ENCODE measurements at regions of chr6 and their contacts with region 1.

Region 1: DNA sequence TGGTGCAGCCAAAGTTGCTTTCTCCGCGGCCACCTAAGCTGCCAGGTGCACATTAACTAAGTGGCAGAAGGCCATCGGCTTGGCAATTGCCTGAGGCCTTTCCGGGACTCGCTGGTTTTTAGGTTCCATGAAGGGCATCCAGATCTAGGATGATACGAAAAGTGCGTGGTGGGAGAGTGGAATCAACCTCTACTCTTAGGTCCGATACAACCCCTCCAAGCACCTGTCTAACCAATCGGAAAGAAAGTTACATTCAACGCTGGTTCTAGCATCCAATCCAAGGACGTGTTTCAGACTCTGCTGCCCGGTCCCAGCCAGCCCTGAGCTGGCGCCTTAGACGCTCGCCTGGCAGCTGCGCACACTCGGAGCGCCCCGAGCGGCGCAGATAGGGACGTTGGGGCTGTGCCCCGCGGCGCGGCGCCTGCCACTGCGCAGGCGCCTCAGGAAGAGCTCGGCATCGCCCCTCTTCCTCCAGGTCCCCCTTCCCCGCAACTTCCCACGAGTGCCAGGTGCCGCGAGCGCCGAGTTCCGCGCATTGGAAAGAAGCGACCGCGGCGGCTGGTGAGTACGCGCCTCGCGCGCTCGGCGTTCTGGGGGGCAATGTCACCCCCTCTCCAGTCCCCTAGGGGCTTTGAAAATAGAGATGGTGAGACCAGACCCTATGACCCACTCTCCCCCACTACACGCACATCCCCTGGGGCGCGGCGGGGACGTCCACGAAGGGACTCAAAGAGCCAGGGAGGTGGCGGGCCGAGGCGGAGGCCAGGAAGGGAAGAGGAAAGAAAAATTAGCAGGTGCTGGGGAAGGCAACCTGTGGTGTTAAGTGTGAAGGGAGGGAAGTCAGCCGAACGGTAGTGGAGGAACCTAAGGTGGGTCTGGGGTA is at the start of gene ENPP4:
- DNase-seq: peak; percentile 78 to 98 (median 91)
- ATAC-seq: peak; percentile 100
- H3K4me3 ChIP-seq: peak within 1 kb of the TSS; percentile 98
- H3K4me3 Mint-ChIP-seq: peak within 1 kb of the TSS; percentile 94 to 99 (median 98)
- H3K27ac ChIP-seq: peak within 1 kb of the TSS; percentile 73
- H3K27ac Mint-ChIP-seq: peak within 1 kb of the TSS; percentile 86 to 97 (median 92)
- H3K4me1 ChIP-seq: peaks cover 15 to 18% of the 10 kb centered on the region in 2 donors
- H3K4me1 Mint-ChIP-seq: peaks cover 19 to 59% (median 46%) of the 10 kb centered on the region in 7 donors
- H3K27me3 ChIP-seq: no peaks in the 10 kb centered on the region
- H3K27me3 Mint-ChIP-seq: peaks cover 0 to 4% (median 0%) of the 10 kb centered on the region in 5 donors
- total RNA-seq, gene ENPP4: 3.8 to 9.8 (median 8.2) TPM

Region 2: DNA sequence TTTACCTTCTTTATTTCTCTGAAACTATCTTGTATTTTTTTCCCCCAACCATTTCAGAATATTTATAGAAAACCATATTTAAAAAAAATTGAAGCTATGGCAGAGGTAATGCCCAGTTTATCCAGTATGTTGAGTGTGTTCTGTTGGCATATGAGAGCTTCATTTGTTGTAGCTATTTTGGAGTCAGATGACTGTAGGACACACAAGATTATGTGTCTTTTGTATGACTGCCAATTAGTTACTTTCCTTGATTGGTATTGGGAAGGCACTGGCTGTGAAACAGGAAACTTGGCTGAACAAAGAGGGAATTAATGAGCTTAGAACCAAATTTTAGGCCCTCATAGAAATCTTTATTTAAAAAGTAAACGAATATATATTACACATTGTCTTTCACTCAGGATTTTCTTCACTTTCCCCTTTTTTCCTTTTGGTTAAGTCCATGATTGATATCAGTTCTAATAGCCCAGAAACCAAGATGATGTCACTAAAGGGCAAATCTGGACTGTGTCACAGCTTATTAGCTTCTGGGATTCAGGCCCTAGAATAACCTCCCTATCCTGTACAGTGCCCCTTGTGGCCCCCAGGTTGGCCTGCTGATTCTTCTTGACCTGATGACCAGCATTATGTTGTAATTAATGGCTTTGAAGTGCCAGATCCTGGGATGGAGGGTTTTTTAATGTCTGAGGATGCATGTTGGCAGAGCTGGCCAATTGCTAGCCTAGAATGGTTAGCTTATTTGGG is 1732.3 kb before region 1 on chr6:
- CTCF ChIA-PET with region 1: no interaction called
- POLR2A ChIA-PET with region 1: no interaction called
- intact Hi-C with region 1: no loop called
- DNase-seq: no peak
- ATAC-seq: no peak
- H3K4me3 ChIP-seq: no peak overlapping the region
- H3K4me3 Mint-ChIP-seq: no peak overlapping the region
- H3K27ac ChIP-seq: no peak overlapping the region
- H3K27ac Mint-ChIP-seq: peak overlapping the region in 2 of 9 donors; percentile 46 to 52
- H3K4me1 ChIP-seq: no peaks in the 10 kb centered on the region
- H3K4me1 Mint-ChIP-seq: peaks cover 26 to 58% (median 32%) of the 10 kb centered on the region in 7 donors
- H3K27me3 ChIP-seq: no peaks in the 10 kb centered on the region
- H3K27me3 Mint-ChIP-seq: no peaks in the 10 kb centered on the region

Region 3: DNA sequence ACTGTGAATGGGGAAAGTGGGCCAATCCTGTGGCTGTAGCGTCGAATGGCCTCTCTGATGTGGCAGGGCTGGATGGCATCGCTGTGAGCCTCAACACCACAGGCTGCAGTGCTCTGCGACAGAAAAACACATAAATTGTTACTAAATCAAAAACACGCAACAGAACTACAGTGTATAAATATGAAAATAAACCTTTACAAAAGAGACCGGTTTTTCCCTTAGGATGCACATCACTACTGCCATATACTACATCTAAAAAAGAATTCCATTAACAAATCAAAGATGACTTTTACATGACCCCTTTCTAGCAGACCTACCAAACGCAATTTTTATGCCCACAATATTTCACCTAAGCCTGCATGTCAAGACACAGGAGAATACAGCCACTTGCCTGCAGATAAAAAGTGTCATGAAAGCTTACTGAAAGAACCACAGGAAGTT is 1197.2 kb before region 1 on chr6:
- CTCF ChIA-PET with region 1: no interaction called
- POLR2A ChIA-PET with region 1: no interaction called
- intact Hi-C with region 1: loop called in 1 of 2 experiments (anchors 10 kb)
- DNase-seq: peak in 7 of 9 donors; percentile 46 to 66 (median 58)
- ATAC-seq: peak; percentile 91
- H3K4me3 ChIP-seq: peak overlapping the region; percentile 37
- H3K4me3 Mint-ChIP-seq: peak overlapping the region; percentile 78 to 98 (median 88)
- H3K27ac ChIP-seq: peak overlapping the region; percentile 71
- H3K27ac Mint-ChIP-seq: peak overlapping the region; percentile 92 to 99 (median 96)
- H3K4me1 ChIP-seq: peaks cover 17 to 42% of the 10 kb centered on the region in 2 donors
- H3K4me1 Mint-ChIP-seq: peaks cover 26 to 67% (median 60%) of the 10 kb centered on the region in 7 donors
- H3K27me3 ChIP-seq: no peaks in the 10 kb centered on the region
- H3K27me3 Mint-ChIP-seq: no peaks in the 10 kb centered on the region

Region 4: GRCh38 chr6:45930420-45931040 is 199.3 kb before region 1 on chr6:
- CTCF ChIA-PET with region 1: interaction called, 5 read pairs
- POLR2A ChIA-PET with region 1: no interaction called
- intact Hi-C with region 1: loop called in 1 of 2 experiments (anchors 1 kb)
- DNase-seq: peak in 8 of 9 donors; percentile 28 to 55 (median 43)
- ATAC-seq: peak; percentile 71
- H3K4me3 ChIP-seq: no peak overlapping the region
- H3K4me3 Mint-ChIP-seq: no peak overlapping the region
- H3K27ac ChIP-seq: no peak overlapping the region
- H3K27ac Mint-ChIP-seq: no peak overlapping the region
- H3K4me1 ChIP-seq: no peaks in the 10 kb centered on the region
- H3K4me1 Mint-ChIP-seq: peaks cover 0 to 5% (median 0%) of the 10 kb centered on the region in 7 donors
- H3K27me3 ChIP-seq: no peaks in the 10 kb centered on the region
- H3K27me3 Mint-ChIP-seq: peaks cover 0 to 5% (median 0%) of the 10 kb centered on the region in 5 donors

Region 5: DNA sequence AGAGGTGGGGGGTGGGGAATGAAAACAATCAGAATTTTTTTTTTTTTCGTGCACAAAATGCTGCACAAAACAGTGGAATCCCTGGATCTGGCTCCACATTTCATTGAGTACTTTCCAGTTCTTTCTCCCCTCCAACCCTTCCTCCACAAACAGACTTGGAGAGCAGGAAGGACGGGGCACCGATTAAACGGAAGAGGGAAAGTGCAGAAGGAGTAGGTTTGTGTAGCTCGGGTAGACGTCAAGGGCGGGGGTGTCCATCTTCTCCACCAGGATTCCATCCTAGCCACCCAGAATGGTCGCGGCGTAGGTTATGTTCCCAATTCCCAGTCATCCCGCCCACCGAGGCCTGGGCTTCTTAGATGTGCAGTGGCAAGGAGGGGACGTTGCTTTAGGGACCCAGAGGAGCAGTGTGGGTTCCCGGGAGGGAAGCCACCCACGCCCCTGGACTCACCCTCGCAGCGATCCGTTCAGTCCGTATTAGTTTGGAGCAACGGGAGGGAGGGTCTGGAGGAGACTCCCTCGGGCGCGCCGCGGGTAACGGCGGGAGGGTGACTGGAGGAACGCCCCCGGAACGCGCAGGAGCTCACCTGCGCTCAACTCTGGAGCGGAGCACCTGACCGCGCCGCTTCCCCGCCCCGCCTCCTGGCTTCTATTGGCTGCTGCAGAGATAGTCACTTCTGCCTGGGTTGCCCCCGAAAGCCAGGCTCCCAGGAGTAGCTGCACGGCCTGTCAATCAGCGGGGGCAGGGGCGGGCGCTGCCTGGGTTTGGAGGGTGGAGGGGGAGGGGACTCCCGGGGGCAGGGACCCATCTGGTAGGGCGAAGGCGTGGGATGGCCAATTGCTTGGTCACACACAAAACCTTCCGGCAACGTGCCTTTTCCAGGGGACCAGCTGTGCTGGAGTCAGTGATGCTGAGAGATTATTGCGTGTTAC is 40.8 kb after region 1 on chr6 and contains the start of gene ENPP5:
- CTCF ChIA-PET with region 1: no interaction called
- POLR2A ChIA-PET with region 1: interaction called, 3 read pairs
- intact Hi-C with region 1: loop called (anchors 1 to 2 kb)
- DNase-seq: peak; percentile 31 to 69 (median 56)
- ATAC-seq: peak; percentile 92
- H3K4me3 ChIP-seq: peak within 1 kb of the TSS; percentile 79
- H3K4me3 Mint-ChIP-seq: peak within 1 kb of the TSS; percentile 68 to 88 (median 84)
- H3K27ac ChIP-seq: no peak within 1 kb of the TSS
- H3K27ac Mint-ChIP-seq: peak within 1 kb of the TSS in 1 of 9 donors; percentile 3
- H3K4me1 ChIP-seq: peaks cover 0 to 20% of the 10 kb centered on the region in 2 donors
- H3K4me1 Mint-ChIP-seq: peaks cover 6 to 19% (median 13%) of the 10 kb centered on the region in 7 donors
- H3K27me3 ChIP-seq: no peaks in the 10 kb centered on the region
- H3K27me3 Mint-ChIP-seq: peaks cover 15 to 74% (median 29%) of the 10 kb centered on the region in 5 donors
- total RNA-seq, gene ENPP5: 0.59 to 1.4 (median 0.92) TPM in 3 of 5 experiments, not detected in the others

Region 6: DNA sequence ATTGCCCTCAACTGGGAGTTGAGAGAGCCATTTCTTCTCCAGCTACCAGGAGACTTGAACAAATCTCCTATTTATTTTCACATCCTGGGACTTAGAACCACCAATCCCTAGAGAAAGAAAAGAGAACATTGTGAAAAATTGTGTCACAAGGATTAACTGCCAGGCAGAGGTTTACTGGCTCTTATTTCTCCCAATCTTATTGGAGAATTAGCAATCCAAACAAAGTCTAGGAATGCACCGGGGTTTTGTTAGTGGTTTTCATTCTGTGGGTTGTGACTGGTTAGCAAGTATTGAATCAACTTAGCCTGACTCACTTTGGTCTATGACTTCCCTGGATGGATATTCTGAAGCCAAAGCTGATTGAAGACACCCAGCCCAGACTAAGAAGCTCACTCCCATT is 62.1 kb after region 1 on chr6:
- CTCF ChIA-PET with region 1: no interaction called
- POLR2A ChIA-PET with region 1: no interaction called
- intact Hi-C with region 1: no loop called
- DNase-seq: no peak
- ATAC-seq: no peak
- H3K4me3 ChIP-seq: no peak overlapping the region
- H3K4me3 Mint-ChIP-seq: no peak overlapping the region
- H3K27ac ChIP-seq: no peak overlapping the region
- H3K27ac Mint-ChIP-seq: no peak overlapping the region
- H3K4me1 ChIP-seq: no peaks in the 10 kb centered on the region
- H3K4me1 Mint-ChIP-seq: no peaks in the 10 kb centered on the region
- H3K27me3 ChIP-seq: no peaks in the 10 kb centered on the region
- H3K27me3 Mint-ChIP-seq: peaks cover 10 to 27% (median 19%) of the 10 kb centered on the region in 5 donors

Region 7: GRCh38 chr6:46221222-46221793 is 91.4 kb after region 1 on chr6:
- CTCF ChIA-PET with region 1: no interaction called
- POLR2A ChIA-PET with region 1: no interaction called
- intact Hi-C with region 1: no loop called
- DNase-seq: peak in 1 of 9 donors; percentile 4
- ATAC-seq: peak; percentile 63
- H3K4me3 ChIP-seq: no peak overlapping the region
- H3K4me3 Mint-ChIP-seq: no peak overlapping the region
- H3K27ac ChIP-seq: no peak overlapping the region
- H3K27ac Mint-ChIP-seq: no peak overlapping the region
- H3K4me1 ChIP-seq: no peaks in the 10 kb centered on the region
- H3K4me1 Mint-ChIP-seq: no peaks in the 10 kb centered on the region
- H3K27me3 ChIP-seq: no peaks in the 10 kb centered on the region
- H3K27me3 Mint-ChIP-seq: peaks cover 4 to 11% (median 4%) of the 10 kb centered on the region in 5 donors

Region 8: GRCh38 chr6:46243754-46244153 is 113.9 kb after region 1 on chr6:
- CTCF ChIA-PET with region 1: no interaction called
- POLR2A ChIA-PET with region 1: no interaction called
- intact Hi-C with region 1: no loop called
- DNase-seq: no peak
- ATAC-seq: no peak
- H3K4me3 ChIP-seq: no peak overlapping the region
- H3K4me3 Mint-ChIP-seq: no peak overlapping the region
- H3K27ac ChIP-seq: no peak overlapping the region
- H3K27ac Mint-ChIP-seq: no peak overlapping the region
- H3K4me1 ChIP-seq: no peaks in the 10 kb centered on the region
- H3K4me1 Mint-ChIP-seq: peaks cover 0 to 4% (median 3%) of the 10 kb centered on the region in 7 donors
- H3K27me3 ChIP-seq: no peaks in the 10 kb centered on the region
- H3K27me3 Mint-ChIP-seq: peaks cover 8 to 17% (median 12%) of the 10 kb centered on the region in 5 donors

Region 9: DNA sequence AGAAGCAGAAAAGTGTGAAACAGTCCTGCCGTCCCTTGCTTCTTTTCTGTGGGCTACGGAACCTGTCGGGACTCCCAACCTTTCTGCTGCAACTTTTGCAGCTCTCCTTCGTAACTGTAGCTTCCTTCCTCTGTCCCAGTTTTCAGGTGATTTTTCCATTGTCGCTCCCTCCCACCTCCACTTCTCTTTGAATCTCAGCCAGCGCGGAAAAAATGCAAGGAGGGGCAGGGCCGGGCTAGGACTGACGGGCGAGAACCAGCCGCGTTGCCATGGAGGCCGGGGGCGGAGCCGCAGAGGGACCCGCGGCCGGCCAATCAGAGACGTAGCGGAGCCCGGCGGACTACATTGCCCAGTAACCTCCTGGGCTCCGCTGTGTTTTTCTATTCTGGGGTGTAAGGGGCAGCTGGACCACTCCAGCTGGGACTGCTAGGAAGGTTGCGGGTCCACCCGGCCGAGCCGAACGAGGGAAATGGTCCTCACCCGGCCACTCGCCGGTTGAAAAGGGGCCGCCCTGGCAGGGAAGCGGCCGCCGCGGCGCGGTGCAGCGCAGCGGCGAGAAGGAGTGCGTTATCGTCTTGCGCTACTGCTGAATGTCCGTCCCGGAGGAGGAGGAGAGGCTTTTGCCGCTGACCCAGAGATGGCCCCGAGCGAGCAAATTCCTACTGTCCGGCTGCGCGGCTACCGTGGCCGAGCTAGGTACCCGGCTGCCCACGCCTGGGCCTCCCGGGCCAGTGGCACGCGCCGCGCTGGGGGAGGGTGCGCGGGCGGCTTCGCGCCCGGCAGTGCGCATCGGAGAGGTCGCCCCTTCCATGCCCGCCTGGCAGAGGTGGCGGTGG is 523.0 kb after region 1 on chr6 and contains the starts of genes CYP39A1 and SLC25A27:
- CTCF ChIA-PET with region 1: no interaction called
- POLR2A ChIA-PET with region 1: no interaction called
- intact Hi-C with region 1: loop called (anchors 1 kb)
- DNase-seq: peak; percentile 58 to 84 (median 64)
- ATAC-seq: peak; percentile 99
- H3K4me3 ChIP-seq: peak within 1 kb of the TSS; percentile 75
- H3K4me3 Mint-ChIP-seq: peak within 1 kb of the TSS; percentile 84 to 96 (median 89)
- H3K27ac ChIP-seq: no peak within 1 kb of the TSS
- H3K27ac Mint-ChIP-seq: peak within 1 kb of the TSS in 3 of 9 donors; percentile 36 to 79 (median 62)
- H3K4me1 ChIP-seq: peaks cover 4 to 9% of the 10 kb centered on the region in 2 donors
- H3K4me1 Mint-ChIP-seq: peaks cover 11 to 17% (median 14%) of the 10 kb centered on the region in 7 donors
- H3K27me3 ChIP-seq: peaks cover 0 to 15% of the 10 kb centered on the region in 2 donors
- H3K27me3 Mint-ChIP-seq: peaks cover 44 to 64% (median 53%) of the 10 kb centered on the region in 5 donors
- total RNA-seq, gene CYP39A1: not detected
- total RNA-seq, gene SLC25A27: 0.50 to 5.7 (median 2.6) TPM in 4 of 5 experiments, not detected in the other

Measured in naive thymus-derived CD4-positive, alpha-beta T cell (primary cell).